ENCODE measurements at regions of chr3 and their contacts with region 1.

Region 1: GRCh38 chr3:20225769-20226168 is 39.8 kb upstream of the SGO1 start:
- DNase-seq: peak; percentile 39
- H3K4me3 Mint-ChIP-seq: no peak overlapping the region
- H3K27ac Mint-ChIP-seq: no peak overlapping the region
- H3K4me1 Mint-ChIP-seq: no peaks in the 10 kb centered on the region
- H3K27me3 Mint-ChIP-seq: no peaks in the 10 kb centered on the region
- CTCF ChIP-seq: peak; percentile 37

Region 2: GRCh38 chr3:19901337-19901736 is 324.4 kb before region 1 on chr3:
- CTCF ChIA-PET with region 1: no interaction called
- POLR2A ChIA-PET with region 1: no interaction called
- intact Hi-C with region 1: no loop called
- DNase-seq: no peak
- H3K4me3 Mint-ChIP-seq: no peak overlapping the region
- H3K27ac Mint-ChIP-seq: peak overlapping the region; percentile 27
- H3K4me1 Mint-ChIP-seq: peaks cover 6% of the 10 kb centered on the region
- H3K27me3 Mint-ChIP-seq: no peaks in the 10 kb centered on the region
- CTCF ChIP-seq: no peak

Region 3: DNA sequence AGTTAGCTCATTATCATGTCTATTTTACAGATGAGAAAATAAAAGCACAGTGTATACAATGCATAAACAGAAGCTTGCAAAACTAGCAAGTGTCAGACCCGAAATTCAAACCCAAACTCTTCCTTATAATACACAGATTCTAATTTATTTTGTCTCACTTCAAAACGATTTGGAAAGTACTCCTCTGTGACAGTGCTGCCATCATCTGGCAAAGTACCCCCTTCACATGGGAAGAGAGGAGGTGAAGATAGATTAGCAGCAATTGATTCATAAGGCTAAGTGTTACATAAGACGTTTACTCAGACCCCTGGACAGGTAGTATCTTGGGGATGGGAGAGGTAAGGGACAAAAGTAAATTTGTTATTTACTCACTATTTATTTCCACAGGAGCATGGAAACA is 704.3 kb after region 1 on chr3:
- CTCF ChIA-PET with region 1: no interaction called
- POLR2A ChIA-PET with region 1: no interaction called
- intact Hi-C with region 1: loop called (anchors 10 kb)
- DNase-seq: peak; percentile 52
- H3K4me3 Mint-ChIP-seq: no peak overlapping the region
- H3K27ac Mint-ChIP-seq: no peak overlapping the region
- H3K4me1 Mint-ChIP-seq: no peaks in the 10 kb centered on the region
- H3K27me3 Mint-ChIP-seq: no peaks in the 10 kb centered on the region
- CTCF ChIP-seq: peak; percentile 40

Measured in MCF 10A (cell line).